Mammary epithelial cell (primary cell): ENCODE measurements at regions of chr11 and their contacts with region 1.

Region 1: GRCh38 chr11:2400069-2400760 is at the start of gene TSSC4:
- DNase-seq: peak; percentile 100
- H3K4me3 ChIP-seq: peak within 1 kb of the TSS; percentile 89 to 92 (median 92)
- H3K27ac ChIP-seq: peak within 1 kb of the TSS; percentile 82
- H3K4me1 ChIP-seq: peaks cover 22% of the 10 kb centered on the region
- H3K27me3 ChIP-seq: no peaks in the 10 kb centered on the region
- CTCF ChIP-seq: peak; percentile 97 to 99
- total RNA-seq, gene TSSC4: 38.3 to 49.9 TPM

Region 2: GRCh38 chr11:1866776-1867175 is 533.4 kb before region 1 on chr11:
- CTCF ChIA-PET with region 1: interaction called, 17 read pairs
- dilution Hi-C with region 1: no loop called
- in situ Hi-C with region 1: no loop called
- intact Hi-C with region 1: no loop called
- DNase-seq: no peak
- H3K4me3 ChIP-seq: no peak overlapping the region
- H3K27ac ChIP-seq: no peak overlapping the region
- H3K4me1 ChIP-seq: peaks cover 22% of the 10 kb centered on the region
- H3K27me3 ChIP-seq: no peaks in the 10 kb centered on the region
- CTCF ChIP-seq: no peak

Region 3: GRCh38 chr11:2178906-2179494 is 221.2 kb before region 1 on chr11:
- CTCF ChIA-PET with region 1: no interaction called
- dilution Hi-C with region 1: no loop called
- in situ Hi-C with region 1: no loop called
- intact Hi-C with region 1: loop called (anchors 5 kb)
- DNase-seq: peak; percentile 82
- H3K4me3 ChIP-seq: no peak overlapping the region
- H3K27ac ChIP-seq: no peak overlapping the region
- H3K4me1 ChIP-seq: peaks cover 40% of the 10 kb centered on the region
- H3K27me3 ChIP-seq: no peaks in the 10 kb centered on the region
- CTCF ChIP-seq: no peak

Region 4: DNA sequence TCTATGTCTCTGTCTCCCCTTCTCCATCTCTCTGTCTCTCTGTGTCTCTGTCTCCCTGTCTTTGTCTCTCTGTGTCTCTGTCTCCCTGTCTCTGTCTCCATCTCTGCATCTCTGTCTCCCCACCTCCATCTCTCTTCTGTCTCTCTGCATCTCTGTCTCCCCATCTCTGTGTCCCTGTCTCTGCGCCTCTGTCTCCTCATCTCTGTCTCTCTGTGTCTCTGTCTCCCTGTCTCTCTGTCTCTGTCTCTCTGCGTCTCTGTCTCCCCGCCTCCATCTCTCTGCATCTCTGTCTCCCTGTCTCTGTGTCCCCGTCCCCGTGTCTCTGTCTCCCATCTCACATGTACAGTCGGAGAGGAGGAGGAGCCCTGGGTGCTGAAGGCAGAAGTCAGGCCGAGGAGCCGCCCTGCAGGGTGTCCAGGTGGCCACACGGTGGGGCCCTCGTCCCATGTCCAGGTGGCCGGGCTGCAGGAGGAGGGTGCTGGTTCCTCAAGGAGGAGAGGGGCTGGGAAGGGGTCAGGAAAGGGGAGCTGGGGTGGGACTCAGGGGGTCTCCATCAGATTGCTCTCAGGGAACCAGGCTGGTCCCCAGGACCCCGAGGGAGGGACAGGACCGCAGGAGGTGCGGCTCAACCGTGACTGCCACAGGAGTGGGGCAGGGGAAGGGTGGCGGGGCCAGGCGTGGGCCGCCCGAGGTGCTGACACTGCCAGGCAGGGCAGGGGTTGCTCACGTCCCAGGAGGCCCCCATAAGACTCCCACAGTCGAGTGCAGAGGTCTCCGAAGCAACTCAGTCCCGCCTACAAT is 203.0 kb before region 1 on chr11:
- CTCF ChIA-PET with region 1: no interaction called
- dilution Hi-C with region 1: no loop called
- in situ Hi-C with region 1: no loop called
- intact Hi-C with region 1: loop called (anchors 5 kb)
- DNase-seq: peak; percentile 36
- H3K4me3 ChIP-seq: no peak overlapping the region
- H3K27ac ChIP-seq: no peak overlapping the region
- H3K4me1 ChIP-seq: peaks cover 3% of the 10 kb centered on the region
- H3K27me3 ChIP-seq: no peaks in the 10 kb centered on the region
- CTCF ChIP-seq: peak; percentile 92 to 98

Region 5: GRCh38 chr11:2305140-2305840 is 94.9 kb before region 1 on chr11:
- CTCF ChIA-PET with region 1: no interaction called
- dilution Hi-C with region 1: no loop called
- in situ Hi-C with region 1: loop called in 1 of 2 experiments (anchors 25 kb)
- intact Hi-C with region 1: loop called (anchors 1 kb)
- DNase-seq: peak; percentile 36
- H3K4me3 ChIP-seq: no peak overlapping the region
- H3K27ac ChIP-seq: no peak overlapping the region
- H3K4me1 ChIP-seq: no peaks in the 10 kb centered on the region
- H3K27me3 ChIP-seq: no peaks in the 10 kb centered on the region
- CTCF ChIP-seq: peak; percentile 66 to 91

Region 6: GRCh38 chr11:2383852-2384804 is 16.1 kb before region 1 on chr11:
- CTCF ChIA-PET with region 1: no interaction called
- dilution Hi-C with region 1: no loop called
- in situ Hi-C with region 1: no loop called
- intact Hi-C with region 1: loop called (anchors 2 kb)
- DNase-seq: no peak
- H3K4me3 ChIP-seq: peak overlapping the region in 1 of 3 experiments; percentile 1
- H3K27ac ChIP-seq: no peak overlapping the region
- H3K4me1 ChIP-seq: peaks cover 67% of the 10 kb centered on the region
- H3K27me3 ChIP-seq: no peaks in the 10 kb centered on the region
- CTCF ChIP-seq: no peak

Region 7: GRCh38 chr11:2420502-2421225 is 20.4 kb after region 1 on chr11:
- CTCF ChIA-PET with region 1: interaction called, 3 read pairs
- dilution Hi-C with region 1: no loop called
- in situ Hi-C with region 1: no loop called
- intact Hi-C with region 1: loop called (anchors 1 kb)
- DNase-seq: peak; percentile 40
- H3K4me3 ChIP-seq: peak overlapping the region in 1 of 3 experiments; percentile 3
- H3K27ac ChIP-seq: no peak overlapping the region
- H3K4me1 ChIP-seq: peaks cover 3% of the 10 kb centered on the region
- H3K27me3 ChIP-seq: no peaks in the 10 kb centered on the region
- CTCF ChIP-seq: peak; percentile 78 to 93